Activated CD8-positive, alpha-beta T cell treated with anti-CD3 and anti-CD28 coated beads, Interleukin-2, amount 10 ng/mL, durations not matched to agents 7 days and 5 days (primary cell): ENCODE measurements at regions of chr5 and their contacts with region 1.

Region 1: GRCh38 chr5:217860-218456 is at the starts of genes CCDC127 and SDHA:
- DNase-seq: peak; percentile 98
- ATAC-seq: peak; percentile 92
- H3K4me3 Mint-ChIP-seq: peak within 1 kb of the TSS; percentile 91
- H3K27ac Mint-ChIP-seq: peak within 1 kb of the TSS; percentile 94
- H3K4me1 Mint-ChIP-seq: peaks cover 57% of the 10 kb centered on the region
- H3K27me3 Mint-ChIP-seq: no peaks in the 10 kb centered on the region
- total RNA-seq, gene CCDC127: 5.3 to 6.8 TPM
- total RNA-seq, gene SDHA: 145 to 152 TPM

Region 2: DNA sequence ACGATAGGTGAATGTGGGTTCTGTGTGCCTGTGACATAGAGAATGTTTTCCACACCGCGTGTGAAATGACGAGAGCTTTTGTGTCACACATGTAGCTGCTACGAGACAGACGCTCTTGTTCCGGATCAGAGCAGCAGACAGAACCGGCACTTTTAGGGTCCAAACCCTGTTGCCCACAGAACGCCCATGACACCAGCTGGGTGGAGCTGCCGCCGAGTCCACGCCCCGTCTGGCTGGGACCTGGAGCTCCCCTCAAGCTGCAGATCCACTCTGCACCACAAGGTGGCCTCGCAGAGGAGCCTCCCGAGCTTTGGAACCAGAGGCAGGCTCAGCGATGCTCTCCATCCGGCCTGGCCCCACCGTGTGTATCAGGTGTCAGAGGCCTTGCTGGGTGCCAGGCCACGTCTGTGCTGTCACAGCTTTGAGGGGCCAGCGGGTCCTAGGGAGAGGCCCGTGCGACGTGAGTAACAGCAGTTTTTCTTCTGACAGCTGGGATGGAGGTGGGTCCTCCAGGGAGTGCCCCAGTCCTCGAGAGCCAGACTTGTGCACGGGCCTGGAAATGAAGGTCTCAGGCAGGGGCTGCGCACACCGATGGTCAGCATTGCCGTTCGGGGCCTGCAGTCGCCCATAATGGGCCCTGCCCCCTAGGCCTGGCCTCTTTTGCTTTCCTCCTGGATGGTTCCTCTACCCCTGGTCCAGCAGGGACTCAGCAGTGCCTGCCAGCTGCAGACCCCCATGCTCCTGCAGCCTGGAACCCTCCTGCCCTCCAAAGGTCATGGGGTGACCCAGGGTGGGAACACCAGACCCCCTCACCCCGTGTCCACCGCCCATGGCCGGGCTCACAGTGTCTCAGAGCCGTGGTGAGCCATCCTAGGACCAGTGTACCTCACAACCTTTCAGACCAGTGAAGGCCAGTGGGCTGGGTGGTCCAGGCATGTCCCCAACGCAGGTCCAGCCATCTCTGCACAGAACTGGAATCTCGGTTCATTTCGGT is 29.2 kb before region 1 on chr5:
- CTCF ChIA-PET with region 1: interaction called, 30 read pairs
- POLR2A ChIA-PET with region 1: interaction called, 8 read pairs
- DNase-seq: peak; percentile 93
- ATAC-seq: peak; percentile 97
- H3K4me3 Mint-ChIP-seq: peak overlapping the region; percentile 31
- H3K27ac Mint-ChIP-seq: peak overlapping the region; percentile 75
- H3K4me1 Mint-ChIP-seq: peaks cover 8% of the 10 kb centered on the region
- H3K27me3 Mint-ChIP-seq: peaks cover 2% of the 10 kb centered on the region

Region 3: DNA sequence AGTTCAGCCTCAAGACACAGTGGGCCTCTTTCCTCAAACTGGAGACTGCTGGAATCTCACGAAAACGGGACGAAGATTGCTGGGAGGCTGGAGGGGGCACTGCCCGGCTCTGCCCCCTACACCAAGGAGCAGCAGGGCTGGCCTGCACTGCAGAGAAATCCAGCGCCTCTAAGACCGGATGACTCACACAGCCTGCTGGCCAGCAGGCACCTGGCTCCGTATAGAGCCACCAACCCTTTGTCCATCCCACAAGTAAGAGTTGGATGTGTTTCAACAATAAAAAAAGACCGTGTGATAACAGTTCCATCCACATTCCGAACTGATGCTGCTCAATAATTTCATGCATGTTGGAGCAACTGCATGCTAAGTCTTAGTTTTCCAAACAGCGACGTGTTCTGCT is 11.6 kb before region 1 on chr5:
- CTCF ChIA-PET with region 1: no interaction called
- POLR2A ChIA-PET with region 1: no interaction called
- DNase-seq: no peak
- ATAC-seq: no peak
- H3K4me3 Mint-ChIP-seq: no peak overlapping the region
- H3K27ac Mint-ChIP-seq: no peak overlapping the region
- H3K4me1 Mint-ChIP-seq: peaks cover 10% of the 10 kb centered on the region
- H3K27me3 Mint-ChIP-seq: no peaks in the 10 kb centered on the region

Region 4: GRCh38 chr5:270340-270739 is 52.4 kb after region 1 on chr5:
- CTCF ChIA-PET with region 1: interaction called, 3 read pairs
- POLR2A ChIA-PET with region 1: interaction called, 23 read pairs
- DNase-seq: no peak
- ATAC-seq: no peak
- H3K4me3 Mint-ChIP-seq: peak overlapping the region; percentile 88
- H3K27ac Mint-ChIP-seq: peak overlapping the region; percentile 68
- H3K4me1 Mint-ChIP-seq: peaks cover 39% of the 10 kb centered on the region
- H3K27me3 Mint-ChIP-seq: no peaks in the 10 kb centered on the region

Region 5: GRCh38 chr5:302966-303365 is 85.0 kb after region 1 on chr5:
- CTCF ChIA-PET with region 1: no interaction called
- POLR2A ChIA-PET with region 1: no interaction called
- DNase-seq: no peak
- ATAC-seq: no peak
- H3K4me3 Mint-ChIP-seq: no peak overlapping the region
- H3K27ac Mint-ChIP-seq: no peak overlapping the region
- H3K4me1 Mint-ChIP-seq: no peaks in the 10 kb centered on the region
- H3K27me3 Mint-ChIP-seq: no peaks in the 10 kb centered on the region